MCF 10A (cell line): ENCODE measurements at regions of chr18 and their contacts with region 1.

Region 1: DNA sequence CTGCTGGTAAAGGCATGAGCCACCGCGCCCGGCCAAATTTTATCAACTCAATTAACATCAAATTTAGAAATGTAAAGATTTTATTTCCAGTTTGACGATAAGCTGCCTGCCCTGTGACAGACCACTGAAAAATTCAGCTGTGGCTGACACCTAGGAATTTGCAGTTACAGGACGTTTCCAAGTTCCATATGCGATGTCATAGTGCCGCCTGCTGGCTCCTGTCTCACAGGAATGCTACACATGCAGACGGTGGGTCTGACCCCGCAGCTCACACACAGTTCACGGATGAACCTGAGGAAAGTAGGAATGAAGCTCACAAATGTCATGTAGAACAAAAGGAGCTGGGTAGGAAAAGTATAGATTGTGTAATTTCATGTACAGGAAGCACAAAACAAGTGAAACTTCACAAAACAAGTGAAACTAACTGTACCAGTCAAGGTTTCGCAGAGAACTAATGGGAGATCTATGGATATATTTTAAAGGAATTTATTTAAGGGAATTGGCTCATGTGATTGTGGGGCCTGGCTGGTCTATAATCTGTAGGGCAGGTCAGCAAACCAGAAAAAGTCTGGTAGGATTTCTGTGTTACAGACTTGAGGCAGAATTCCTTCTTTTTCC is 13.2 kb upstream of the SEH1L start:
- DNase-seq: peak; percentile 86
- H3K4me3 Mint-ChIP-seq: no peak overlapping the region
- H3K27ac Mint-ChIP-seq: no peak overlapping the region
- H3K4me1 Mint-ChIP-seq: peaks cover 6% of the 10 kb centered on the region
- H3K27me3 Mint-ChIP-seq: no peaks in the 10 kb centered on the region
- CTCF ChIP-seq: peak; percentile 93

Region 2: DNA sequence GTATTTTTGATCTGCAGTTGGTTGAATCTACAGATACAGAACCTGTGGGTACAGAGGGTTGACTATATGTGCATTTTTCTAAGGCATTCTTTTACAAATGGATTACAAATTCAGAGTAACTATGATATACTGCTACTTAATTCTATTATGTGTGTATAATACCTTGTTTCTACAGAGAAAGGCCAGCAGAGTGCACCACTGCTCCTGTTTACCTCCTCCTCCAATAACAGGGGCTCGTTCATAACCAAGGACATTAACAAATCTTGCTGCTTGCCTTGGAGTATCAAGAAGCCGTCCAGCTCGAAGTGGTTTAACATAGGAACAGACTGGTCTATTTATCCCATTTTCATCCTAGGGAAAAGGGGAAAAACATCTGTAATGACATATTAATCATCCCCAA is 248.5 kb before region 1 on chr18:
- CTCF ChIA-PET with region 1: interaction called, 6 read pairs
- POLR2A ChIA-PET with region 1: no interaction called
- intact Hi-C with region 1: loop called (anchors 1 kb)
- DNase-seq: peak; percentile 35
- H3K4me3 Mint-ChIP-seq: no peak overlapping the region
- H3K27ac Mint-ChIP-seq: no peak overlapping the region
- H3K4me1 Mint-ChIP-seq: no peaks in the 10 kb centered on the region
- H3K27me3 Mint-ChIP-seq: no peaks in the 10 kb centered on the region
- CTCF ChIP-seq: peak; percentile 23

Region 3: GRCh38 chr18:12721495-12722275 is 212.9 kb before region 1 on chr18:
- CTCF ChIA-PET with region 1: interaction called, 162 read pairs
- POLR2A ChIA-PET with region 1: interaction called, 10 read pairs
- intact Hi-C with region 1: no loop called
- DNase-seq: no peak
- H3K4me3 Mint-ChIP-seq: no peak overlapping the region
- H3K27ac Mint-ChIP-seq: no peak overlapping the region
- H3K4me1 Mint-ChIP-seq: no peaks in the 10 kb centered on the region
- H3K27me3 Mint-ChIP-seq: no peaks in the 10 kb centered on the region
- CTCF ChIP-seq: no peak

Region 4: DNA sequence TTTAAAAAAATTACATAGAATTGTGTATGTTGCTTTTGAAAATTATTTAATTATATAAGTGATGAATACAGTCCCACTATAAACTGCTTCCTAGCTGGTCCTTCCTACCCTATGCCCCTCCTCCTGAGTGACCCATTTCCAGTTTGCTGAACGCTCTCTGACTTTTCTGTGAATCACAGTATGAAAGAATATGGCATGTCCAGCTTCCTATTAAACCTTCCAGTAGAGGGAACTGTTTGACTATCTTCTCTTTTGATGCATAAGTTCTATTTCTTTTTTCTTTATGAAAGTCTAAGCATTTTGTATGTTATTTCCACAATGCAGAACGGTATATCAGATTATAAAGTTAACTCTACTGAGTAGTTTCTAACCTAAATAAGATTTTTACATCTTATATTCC is 190.5 kb before region 1 on chr18:
- CTCF ChIA-PET with region 1: interaction called, 85 read pairs
- POLR2A ChIA-PET with region 1: interaction called, 10 read pairs
- intact Hi-C with region 1: loop called (anchors 1 kb)
- DNase-seq: peak; percentile 63
- H3K4me3 Mint-ChIP-seq: no peak overlapping the region
- H3K27ac Mint-ChIP-seq: no peak overlapping the region
- H3K4me1 Mint-ChIP-seq: peaks cover 17% of the 10 kb centered on the region
- H3K27me3 Mint-ChIP-seq: no peaks in the 10 kb centered on the region
- CTCF ChIP-seq: peak; percentile 43

Region 5: DNA sequence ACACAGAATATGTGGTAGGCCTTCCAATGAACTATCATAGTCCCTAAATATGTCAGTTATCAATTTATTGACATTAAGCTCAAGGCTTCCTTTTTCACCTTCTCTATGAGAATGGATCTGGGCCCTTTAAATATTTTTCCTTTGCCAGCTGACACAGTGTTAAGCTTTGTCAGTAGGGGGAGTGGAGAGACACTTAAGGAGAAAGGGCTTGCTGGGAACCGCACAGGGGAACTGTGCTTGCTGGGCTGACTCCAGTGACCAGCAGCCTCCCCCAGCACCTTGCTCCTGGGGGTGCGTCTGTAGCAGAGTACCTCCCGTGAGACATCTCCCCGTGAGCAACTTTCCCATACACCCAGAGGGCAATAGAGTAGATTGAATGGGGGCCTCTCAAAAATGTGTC is 44.1 kb before region 1 on chr18:
- CTCF ChIA-PET with region 1: interaction called, 44 read pairs
- POLR2A ChIA-PET with region 1: interaction called, 4 read pairs
- intact Hi-C with region 1: loop called (anchors 1 kb)
- DNase-seq: peak; percentile 51
- H3K4me3 Mint-ChIP-seq: no peak overlapping the region
- H3K27ac Mint-ChIP-seq: peak overlapping the region; percentile 85
- H3K4me1 Mint-ChIP-seq: peaks cover 5% of the 10 kb centered on the region
- H3K27me3 Mint-ChIP-seq: no peaks in the 10 kb centered on the region
- CTCF ChIP-seq: no peak

Region 6: DNA sequence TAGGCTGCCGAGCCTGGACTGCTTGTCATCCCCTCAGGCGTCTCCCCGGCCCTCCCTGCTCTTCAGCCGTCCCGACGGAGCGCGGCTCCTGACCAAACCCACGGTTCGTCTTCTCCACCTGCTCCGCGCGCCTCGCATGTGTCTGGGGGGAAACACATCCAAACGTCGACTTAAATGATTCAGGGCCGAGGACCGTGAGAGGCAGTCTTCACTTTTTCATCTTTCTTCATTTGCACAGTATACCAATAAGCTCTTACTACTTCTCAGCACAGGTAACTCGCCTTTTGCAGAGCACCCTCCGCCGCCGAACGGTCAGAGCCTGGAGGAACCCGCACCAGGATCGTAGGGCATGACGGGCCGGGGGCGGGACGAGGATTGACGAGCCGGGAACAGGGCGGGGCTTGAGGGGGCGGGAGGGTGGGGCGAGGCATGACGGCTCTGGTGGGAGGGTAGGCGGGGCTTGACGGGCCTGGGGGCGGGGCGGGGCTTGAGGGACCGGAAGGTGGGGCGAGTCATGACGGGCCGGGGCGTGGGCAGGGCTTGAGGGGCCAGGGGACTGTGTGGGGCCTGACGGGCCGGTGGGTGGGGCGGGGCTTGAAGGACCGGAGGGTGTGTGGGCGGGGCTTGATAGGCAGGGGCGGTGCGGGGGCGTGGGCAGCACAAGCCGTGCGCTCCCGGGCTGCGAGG is 12.9 kb after region 1 on chr18 and contains the start of gene SEH1L:
- CTCF ChIA-PET with region 1: interaction called, 34 read pairs
- POLR2A ChIA-PET with region 1: interaction called, 3 read pairs
- intact Hi-C with region 1: no loop called
- DNase-seq: peak; percentile 96
- H3K4me3 Mint-ChIP-seq: peak within 1 kb of the TSS; percentile 96
- H3K27ac Mint-ChIP-seq: peak within 1 kb of the TSS; percentile 98
- H3K4me1 Mint-ChIP-seq: peaks cover 14% of the 10 kb centered on the region
- H3K27me3 Mint-ChIP-seq: no peaks in the 10 kb centered on the region
- CTCF ChIP-seq: no peak
- total RNA-seq, gene SEH1L: 108 and 139 TPM in 2 replicates

Region 7: DNA sequence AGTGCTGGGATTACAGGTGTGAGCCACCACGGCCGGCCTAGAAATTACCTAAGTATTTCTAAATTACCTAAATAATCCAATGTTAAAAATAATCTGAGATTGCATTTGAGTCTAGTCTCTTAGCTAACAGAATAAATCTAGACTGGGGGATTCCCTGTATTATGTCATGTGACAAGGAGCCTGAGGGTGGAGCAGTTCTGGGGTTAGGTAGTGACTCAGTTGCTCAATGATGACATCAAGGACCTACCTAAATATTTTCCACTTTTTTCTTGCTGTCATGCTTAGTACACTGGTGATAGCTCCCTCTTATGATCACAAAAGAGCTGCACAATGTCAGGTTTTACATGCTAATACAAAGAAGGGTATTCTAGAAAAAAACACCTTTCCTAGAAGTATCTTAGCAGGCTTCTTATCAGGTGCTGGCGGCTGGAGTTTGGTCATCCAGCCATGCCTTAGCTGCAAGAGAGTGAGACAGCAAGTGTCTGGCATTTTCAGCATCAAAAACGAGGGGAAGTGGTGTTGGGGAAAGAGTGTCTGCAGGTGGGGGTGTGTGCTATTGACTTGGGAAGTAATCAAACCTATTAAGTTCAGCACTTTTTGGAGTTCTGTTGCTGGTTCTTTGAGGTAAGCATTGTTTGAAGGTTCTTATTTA is 39.1 kb after region 1 on chr18:
- CTCF ChIA-PET with region 1: no interaction called
- POLR2A ChIA-PET with region 1: no interaction called
- intact Hi-C with region 1: no loop called
- DNase-seq: no peak
- H3K4me3 Mint-ChIP-seq: no peak overlapping the region
- H3K27ac Mint-ChIP-seq: no peak overlapping the region
- H3K4me1 Mint-ChIP-seq: peaks cover 7% of the 10 kb centered on the region
- H3K27me3 Mint-ChIP-seq: no peaks in the 10 kb centered on the region
- CTCF ChIP-seq: no peak

Region 8: DNA sequence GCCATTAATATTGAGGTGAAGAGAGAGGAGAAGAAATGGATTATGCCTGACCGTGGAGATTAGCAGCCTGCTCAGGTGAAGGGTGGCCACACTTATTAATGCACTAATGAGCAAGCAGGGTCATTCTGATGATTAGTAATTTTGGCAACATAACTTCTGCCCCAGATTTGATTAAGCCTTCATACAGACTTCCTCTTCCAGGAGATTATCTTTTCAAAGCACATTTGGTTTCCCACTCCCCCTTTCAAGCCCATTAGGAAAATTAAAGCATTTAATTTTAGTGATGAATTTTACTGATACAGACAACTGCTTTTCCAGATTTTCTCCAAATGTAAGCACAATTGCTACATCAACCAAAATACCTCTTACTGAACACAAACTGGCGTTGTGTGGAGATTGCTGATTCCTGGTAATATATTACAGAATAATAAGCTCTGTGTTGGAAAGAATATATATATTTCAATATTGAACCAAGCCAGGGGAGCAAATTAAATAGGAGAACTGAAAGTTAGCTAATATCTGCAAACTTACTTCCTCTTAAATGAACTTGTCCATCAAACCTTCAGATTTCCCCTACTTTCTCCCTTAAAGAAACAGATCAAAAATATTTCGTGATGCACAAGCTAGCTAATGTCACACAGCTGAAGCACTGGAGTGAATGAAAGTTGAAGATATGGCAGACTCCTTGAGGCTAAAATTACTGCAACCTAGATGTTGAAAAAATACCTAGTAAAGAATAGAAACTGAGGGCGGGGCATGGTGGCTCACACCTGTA is 651.0 kb after region 1 on chr18:
- CTCF ChIA-PET with region 1: no interaction called
- POLR2A ChIA-PET with region 1: no interaction called
- intact Hi-C with region 1: no loop called
- DNase-seq: no peak
- H3K4me3 Mint-ChIP-seq: no peak overlapping the region
- H3K27ac Mint-ChIP-seq: no peak overlapping the region
- H3K4me1 Mint-ChIP-seq: no peaks in the 10 kb centered on the region
- H3K27me3 Mint-ChIP-seq: no peaks in the 10 kb centered on the region
- CTCF ChIP-seq: no peak